Naive thymus-derived CD4-positive, alpha-beta T cell (primary cell): ENCODE measurements at regions of chr15 and their contacts with region 1.

Region 1: GRCh38 chr15:64856429-64857145 is 14.9 kb downstream of the PLEKHO2 start:
- DNase-seq: no peak
- ATAC-seq: peak; percentile 19
- H3K4me3 ChIP-seq: no peak overlapping the region
- H3K4me3 Mint-ChIP-seq: peak overlapping the region in 4 of 10 donors; percentile 12 to 48 (median 20)
- H3K27ac ChIP-seq: peak overlapping the region; percentile 17
- H3K27ac Mint-ChIP-seq: peak overlapping the region in 8 of 9 donors; percentile 26 to 91 (median 66)
- H3K4me1 ChIP-seq: peaks cover 8 to 27% of the 10 kb centered on the region in 2 donors
- H3K4me1 Mint-ChIP-seq: peaks cover 38 to 60% (median 56%) of the 10 kb centered on the region in 7 donors
- H3K27me3 ChIP-seq: no peaks in the 10 kb centered on the region
- H3K27me3 Mint-ChIP-seq: no peaks in the 10 kb centered on the region

Region 2: GRCh38 chr15:64800476-64800875 is 56.1 kb before region 1 on chr15:
- CTCF ChIA-PET with region 1: no interaction called
- POLR2A ChIA-PET with region 1: no interaction called
- intact Hi-C with region 1: no loop called
- DNase-seq: no peak
- ATAC-seq: no peak
- H3K4me3 ChIP-seq: no peak overlapping the region
- H3K4me3 Mint-ChIP-seq: no peak overlapping the region
- H3K27ac ChIP-seq: no peak overlapping the region
- H3K27ac Mint-ChIP-seq: no peak overlapping the region
- H3K4me1 ChIP-seq: no peaks in the 10 kb centered on the region
- H3K4me1 Mint-ChIP-seq: no peaks in the 10 kb centered on the region
- H3K27me3 ChIP-seq: no peaks in the 10 kb centered on the region
- H3K27me3 Mint-ChIP-seq: peaks cover 0 to 3% (median 0%) of the 10 kb centered on the region in 5 donors

Region 3: DNA sequence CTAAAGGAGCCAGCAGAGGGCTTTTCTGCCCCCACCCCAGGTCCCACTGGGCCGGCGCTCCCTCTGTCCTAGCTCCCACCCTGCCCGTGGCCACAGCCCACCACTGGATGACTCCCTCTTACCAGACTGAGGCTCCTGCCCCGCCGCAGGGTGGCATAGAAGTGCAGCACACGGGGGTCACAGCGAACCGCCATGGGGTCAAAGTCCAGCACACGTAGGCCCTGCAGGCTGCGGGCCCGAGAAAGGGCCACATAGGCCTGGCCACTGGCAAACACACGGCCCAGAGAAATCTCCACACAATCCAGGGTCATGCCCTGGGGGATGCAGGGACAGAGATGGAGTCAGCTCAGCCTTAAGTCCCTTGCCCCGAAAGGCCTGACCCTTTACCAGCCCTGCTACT is 40.1 kb before region 1 on chr15:
- CTCF ChIA-PET with region 1: no interaction called
- POLR2A ChIA-PET with region 1: no interaction called
- intact Hi-C with region 1: no loop called
- DNase-seq: no peak
- ATAC-seq: no peak
- H3K4me3 ChIP-seq: no peak overlapping the region
- H3K4me3 Mint-ChIP-seq: no peak overlapping the region
- H3K27ac ChIP-seq: no peak overlapping the region
- H3K27ac Mint-ChIP-seq: no peak overlapping the region
- H3K4me1 ChIP-seq: no peaks in the 10 kb centered on the region
- H3K4me1 Mint-ChIP-seq: peaks cover 0 to 5% (median 0%) of the 10 kb centered on the region in 7 donors
- H3K27me3 ChIP-seq: no peaks in the 10 kb centered on the region
- H3K27me3 Mint-ChIP-seq: no peaks in the 10 kb centered on the region

Region 4: GRCh38 chr15:64970698-64971097 is 114.1 kb after region 1 on chr15:
- CTCF ChIA-PET with region 1: no interaction called
- POLR2A ChIA-PET with region 1: no interaction called
- intact Hi-C with region 1: loop called in 1 of 2 experiments (anchors 2 kb)
- DNase-seq: no peak
- ATAC-seq: no peak
- H3K4me3 ChIP-seq: no peak overlapping the region
- H3K4me3 Mint-ChIP-seq: no peak overlapping the region
- H3K27ac ChIP-seq: no peak overlapping the region
- H3K27ac Mint-ChIP-seq: no peak overlapping the region
- H3K4me1 ChIP-seq: no peaks in the 10 kb centered on the region
- H3K4me1 Mint-ChIP-seq: peaks cover 0 to 4% (median 0%) of the 10 kb centered on the region in 7 donors
- H3K27me3 ChIP-seq: no peaks in the 10 kb centered on the region
- H3K27me3 Mint-ChIP-seq: no peaks in the 10 kb centered on the region